GM12878 (cell line): ENCODE measurements at regions of chr11 and their contacts with region 1.

Region 1: GRCh38 chr11:16945671-16946469 is 68.3 kb downstream of the PLEKHA7 start:
- DNase-seq: peak; percentile 61
- ATAC-seq: peak; percentile 92
- H3K4me3 ChIP-seq: peak overlapping the region; percentile 39; the same call in 1 of the 2 replicates
- H3K27ac ChIP-seq: peak overlapping the region; percentile 64
- H3K4me1 ChIP-seq: peaks cover 12% of the 10 kb centered on the region
- H3K27me3 ChIP-seq: no peaks in the 10 kb centered on the region
- CTCF ChIP-seq: peak; percentile 86 to 89 (median 88)
- EP300 ChIP-seq: no peak
- POLR2A ChIP-seq: no peak
- RAD21 ChIP-seq: peak; percentile 97

Region 2: GRCh38 chr11:16935518-16936302 is 10.2 kb before region 1 on chr11:
- CTCF ChIA-PET with region 1: interaction called, 15 read pairs
- POLR2A ChIA-PET with region 1: no interaction called
- RAD21 ChIA-PET with region 1: interaction called, 9 read pairs
- SMC1A ChIA-PET with region 1: interaction called, 12 read pairs
- in situ Hi-C with region 1: no loop called
- intact Hi-C with region 1: no loop called
- DNase-seq: no peak
- ATAC-seq: peak; percentile 88
- H3K4me3 ChIP-seq: no peak overlapping the region
- H3K27ac ChIP-seq: no peak overlapping the region
- H3K4me1 ChIP-seq: no peaks in the 10 kb centered on the region
- H3K27me3 ChIP-seq: no peaks in the 10 kb centered on the region; a peak in 1 of 4 replicates
- CTCF ChIP-seq: peak; percentile 64 to 85 (median 78)
- EP300 ChIP-seq: no peak
- POLR2A ChIP-seq: no peak
- RAD21 ChIP-seq: peak; percentile 86

Region 3: DNA sequence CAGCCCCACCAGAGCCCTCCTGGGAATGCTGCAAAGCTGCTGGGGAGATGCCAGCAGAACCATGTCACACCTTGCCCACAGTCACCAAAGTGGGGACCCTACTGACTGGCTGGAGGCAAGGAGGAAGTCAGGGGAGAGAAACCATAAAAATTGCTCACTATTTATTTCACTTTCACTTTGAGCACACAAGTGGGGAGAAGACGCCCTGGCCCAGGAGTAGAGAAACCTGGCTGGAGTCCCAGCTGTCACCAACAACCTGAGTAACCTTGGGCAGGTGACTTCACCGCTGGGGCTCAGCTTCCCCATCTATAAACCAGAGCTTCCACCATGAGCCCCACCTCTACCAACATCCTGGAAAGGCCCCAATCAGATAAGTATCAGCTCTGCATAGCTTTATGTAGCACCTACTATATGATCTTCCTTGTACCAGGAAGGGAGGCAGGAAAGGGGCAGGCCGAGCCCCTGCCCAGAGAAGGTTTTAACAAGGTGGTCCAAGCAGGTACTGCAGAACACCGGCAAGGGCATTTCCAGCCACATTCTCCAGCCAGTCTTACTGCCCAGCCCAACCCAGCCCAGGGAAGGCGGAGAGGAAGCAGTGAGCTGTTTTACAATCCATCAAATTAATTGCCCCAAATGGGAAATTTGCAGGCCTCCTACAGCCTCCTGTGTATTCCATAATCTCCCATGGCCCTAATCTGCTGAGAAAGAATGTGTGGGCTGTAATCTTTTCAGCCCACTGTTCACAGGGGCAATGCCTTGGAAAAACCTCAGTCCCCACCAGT is 40.8 kb after region 1 on chr11:
- CTCF ChIA-PET with region 1: no interaction called
- POLR2A ChIA-PET with region 1: interaction called, 3 read pairs
- RAD21 ChIA-PET with region 1: interaction called, 8 read pairs
- SMC1A ChIA-PET with region 1: interaction called, 7 read pairs
- in situ Hi-C with region 1: no loop called
- intact Hi-C with region 1: loop called (anchors 2 kb)
- DNase-seq: peak; percentile 75
- ATAC-seq: peak; percentile 98
- H3K4me3 ChIP-seq: no peak overlapping the region
- H3K27ac ChIP-seq: no peak overlapping the region
- H3K4me1 ChIP-seq: peaks cover 12% of the 10 kb centered on the region
- H3K27me3 ChIP-seq: no peaks in the 10 kb centered on the region
- CTCF ChIP-seq: no peak
- EP300 ChIP-seq: no peak
- POLR2A ChIP-seq: no peak
- RAD21 ChIP-seq: no peak

Region 4: GRCh38 chr11:17077520-17078401 is 131.9 kb after region 1 on chr11 and contains the start of gene RPS13:
- CTCF ChIA-PET with region 1: interaction called, 9 read pairs
- POLR2A ChIA-PET with region 1: interaction called, 3 read pairs
- RAD21 ChIA-PET with region 1: interaction called, 14 read pairs
- SMC1A ChIA-PET with region 1: interaction called, 7 read pairs
- in situ Hi-C with region 1: no loop called
- intact Hi-C with region 1: loop called (anchors 5 kb)
- DNase-seq: peak; percentile 97
- ATAC-seq: peak; percentile 93
- H3K4me3 ChIP-seq: peak within 1 kb of the TSS; percentile 90
- H3K27ac ChIP-seq: peak within 1 kb of the TSS; percentile 95
- H3K4me1 ChIP-seq: no peaks in the 10 kb centered on the region; the same call in 1 of the 2 replicates
- H3K27me3 ChIP-seq: no peaks in the 10 kb centered on the region
- CTCF ChIP-seq: no peak
- EP300 ChIP-seq: no peak
- POLR2A ChIP-seq: peak; percentile 100
- RAD21 ChIP-seq: no peak
- polyA plus RNA-seq, gene RPS13: 4,150 to 4,753 TPM

Region 5: DNA sequence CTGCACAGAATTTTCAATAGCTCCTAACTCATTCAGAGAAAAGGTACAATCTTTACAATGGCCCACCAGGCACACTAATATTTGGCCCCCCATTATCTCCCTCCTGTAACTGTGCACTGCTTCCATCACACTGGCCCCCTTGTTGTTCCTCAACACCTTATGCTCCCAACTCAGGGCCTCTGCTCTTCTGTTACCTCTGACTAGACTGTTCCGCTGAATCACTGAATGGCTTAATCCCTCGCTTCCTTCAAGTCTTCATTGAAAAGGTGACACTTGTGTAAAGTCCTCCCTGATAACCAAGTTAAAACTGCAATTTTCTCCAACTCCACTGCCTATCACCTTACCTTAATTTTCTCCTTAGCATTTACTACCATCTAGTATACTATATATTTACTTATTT is 240.1 kb after region 1 on chr11:
- CTCF ChIA-PET with region 1: no interaction called
- POLR2A ChIA-PET with region 1: no interaction called
- RAD21 ChIA-PET with region 1: no interaction called
- SMC1A ChIA-PET with region 1: no interaction called
- in situ Hi-C with region 1: no loop called
- intact Hi-C with region 1: no loop called
- DNase-seq: no peak
- ATAC-seq: no peak
- H3K4me3 ChIP-seq: no peak overlapping the region
- H3K27ac ChIP-seq: no peak overlapping the region
- H3K4me1 ChIP-seq: peaks cover 5% of the 10 kb centered on the region; the same call in 1 of the 2 replicates
- H3K27me3 ChIP-seq: no peaks in the 10 kb centered on the region
- CTCF ChIP-seq: no peak
- EP300 ChIP-seq: no peak
- POLR2A ChIP-seq: no peak
- RAD21 ChIP-seq: no peak

Region 6: GRCh38 chr11:17504330-17505107 is 558.6 kb after region 1 on chr11:
- CTCF ChIA-PET with region 1: no interaction called
- POLR2A ChIA-PET with region 1: no interaction called
- RAD21 ChIA-PET with region 1: no interaction called
- SMC1A ChIA-PET with region 1: no interaction called
- in situ Hi-C with region 1: no loop called
- intact Hi-C with region 1: loop called (anchors 5 kb)
- DNase-seq: no peak
- ATAC-seq: peak; percentile 91
- H3K4me3 ChIP-seq: no peak overlapping the region
- H3K27ac ChIP-seq: no peak overlapping the region
- H3K4me1 ChIP-seq: no peaks in the 10 kb centered on the region; the same call in 1 of the 2 replicates
- H3K27me3 ChIP-seq: no peaks in the 10 kb centered on the region; a peak in 2 of 4 replicates
- CTCF ChIP-seq: peak; percentile 79 to 92 (median 85)
- EP300 ChIP-seq: no peak
- POLR2A ChIP-seq: no peak
- RAD21 ChIP-seq: peak; percentile 80